ENCODE measurements at regions of chr3 and their contacts with region 1.

Region 1: GRCh38 chr3:71397046-71397445 is 186.5 kb downstream of the FOXP1 start:
- DNase-seq: peak in 1 of 5 donors; percentile 18
- ATAC-seq: no peak
- H3K4me3 ChIP-seq: no peak overlapping the region
- H3K27ac ChIP-seq: no peak overlapping the region
- H3K4me1 ChIP-seq: peaks cover 0 to 63% (median 7%) of the 10 kb centered on the region in 12 donors
- H3K27me3 ChIP-seq: no peaks in the 10 kb centered on the region
- CTCF ChIP-seq: peak; percentile 39 to 61 (median 54)
- POLR2A ChIP-seq: no peak

Region 2: DNA sequence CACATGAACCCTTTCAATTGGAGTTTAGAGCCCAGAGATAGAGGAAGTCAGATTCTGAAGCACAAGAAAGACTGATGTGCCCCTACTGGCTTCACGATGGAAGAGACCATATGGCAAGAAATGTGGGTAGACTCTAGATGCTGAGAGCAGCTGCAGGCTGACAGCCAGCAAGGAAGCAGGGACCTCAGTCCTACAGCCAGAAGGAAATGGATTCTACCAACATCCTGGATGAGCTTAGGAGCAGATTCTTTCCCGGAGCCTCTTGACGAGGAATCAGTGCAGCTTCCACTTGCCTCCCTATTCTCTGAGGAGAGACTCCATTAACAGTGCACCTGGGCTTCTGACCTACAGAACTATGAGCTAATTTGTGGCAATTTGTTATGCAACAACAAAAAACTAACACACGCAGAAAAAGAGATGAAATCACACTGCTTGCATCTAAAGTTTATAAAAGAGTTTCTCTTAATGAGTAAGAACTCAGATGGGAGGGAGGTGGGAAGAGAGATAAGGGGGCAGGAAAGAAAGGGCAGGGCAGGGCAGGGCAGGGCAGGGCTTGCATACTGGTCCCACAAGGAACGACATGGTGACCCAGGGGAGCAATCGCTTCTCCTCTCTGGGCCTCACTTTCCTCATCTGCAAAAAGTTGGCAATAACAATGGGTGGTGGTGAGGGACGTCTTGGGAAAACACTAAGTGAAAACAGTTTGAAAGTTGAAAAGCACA is 254.4 kb before region 1 on chr3:
- intact Hi-C with region 1: loop called in 1 of 10 experiments (anchors 10 kb)
- DNase-seq: no peak
- ATAC-seq: peak in 1 of 4 donors; percentile 33
- H3K4me3 ChIP-seq: no peak overlapping the region
- H3K27ac ChIP-seq: peak overlapping the region in 2 of 12 donors; percentile 25 to 76
- H3K4me1 ChIP-seq: peaks cover 0 to 5% (median 0%) of the 10 kb centered on the region in 12 donors
- H3K27me3 ChIP-seq: no peaks in the 10 kb centered on the region
- CTCF ChIP-seq: no peak
- POLR2A ChIP-seq: no peak

Measured in heart left ventricle (tissue), 16 donors.